ENCODE measurements at regions of chr7 and their contacts with region 1.

Region 1: GRCh38 chr7:18590744-18591340 is 95.3 kb downstream of the HDAC9 start:
- DNase-seq: no peak
- H3K4me3 ChIP-seq: no peak overlapping the region
- H3K27ac ChIP-seq: no peak overlapping the region
- H3K4me1 ChIP-seq: no peaks in the 10 kb centered on the region
- H3K27me3 ChIP-seq: no peaks in the 10 kb centered on the region
- CTCF ChIP-seq: peak in 1 of 3 experiments; percentile 62; a peak in 2 of 4 replicates
- EP300 ChIP-seq: no peak
- POLR2A ChIP-seq: no peak
- RAD21 ChIP-seq: peak; percentile 67

Region 2: GRCh38 chr7:18570890-18571478 is 19.9 kb before region 1 on chr7:
- CTCF ChIA-PET with region 1: interaction called, 53 read pairs
- POLR2A ChIA-PET with region 1: no interaction called
- DNase-seq: no peak
- H3K4me3 ChIP-seq: no peak overlapping the region
- H3K27ac ChIP-seq: no peak overlapping the region
- H3K4me1 ChIP-seq: peaks cover 0 to 9% (median 2%) of the 10 kb centered on the region in 4 experiments; a peak in 4 of 7 replicates
- H3K27me3 ChIP-seq: no peaks in the 10 kb centered on the region
- CTCF ChIP-seq: peak in 2 of 3 experiments; percentile 18 to 31; a peak in 2 of 4 replicates
- EP300 ChIP-seq: no peak
- POLR2A ChIP-seq: no peak
- RAD21 ChIP-seq: peak; percentile 57 to 59

Region 3: DNA sequence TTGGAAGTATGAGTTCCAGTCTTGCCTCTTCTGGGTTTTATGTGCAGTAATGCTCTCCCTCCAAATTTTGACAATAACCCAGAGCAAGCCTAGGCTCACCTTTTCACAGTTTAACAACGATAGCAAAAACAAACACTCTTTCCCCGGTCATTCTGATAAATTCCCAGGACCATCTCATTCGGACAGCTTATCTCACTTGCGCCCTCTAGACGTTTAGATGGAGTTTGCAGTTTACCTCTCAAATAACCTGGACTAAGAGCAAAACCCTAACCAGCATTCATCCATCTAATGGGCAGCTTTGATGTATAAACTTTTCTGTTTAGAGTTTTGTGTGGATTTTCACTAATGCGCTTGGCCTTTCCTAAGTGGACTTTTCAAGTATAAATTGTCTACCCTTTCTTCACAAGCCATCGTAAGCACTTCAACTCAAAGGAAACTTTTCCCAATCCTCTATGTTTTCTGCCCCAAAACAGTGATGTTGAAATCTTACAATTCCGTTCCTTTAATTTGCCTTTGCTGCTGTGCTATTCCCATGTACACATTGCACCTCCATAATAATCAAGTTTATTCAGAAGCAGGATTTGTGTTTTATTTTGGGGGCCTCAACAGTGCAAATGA is 19.6 kb after region 1 on chr7:
- CTCF ChIA-PET with region 1: interaction called, 13 read pairs
- POLR2A ChIA-PET with region 1: no interaction called
- DNase-seq: peak; percentile 3 to 55
- H3K4me3 ChIP-seq: no peak overlapping the region
- H3K27ac ChIP-seq: no peak overlapping the region
- H3K4me1 ChIP-seq: no peaks in the 10 kb centered on the region; a peak in 1 of 7 replicates
- H3K27me3 ChIP-seq: no peaks in the 10 kb centered on the region
- CTCF ChIP-seq: peak in 2 of 3 experiments; percentile 61 to 86; a peak in 2 of 4 replicates
- EP300 ChIP-seq: no peak
- POLR2A ChIP-seq: no peak
- RAD21 ChIP-seq: peak; percentile 57 to 70

Region 4: DNA sequence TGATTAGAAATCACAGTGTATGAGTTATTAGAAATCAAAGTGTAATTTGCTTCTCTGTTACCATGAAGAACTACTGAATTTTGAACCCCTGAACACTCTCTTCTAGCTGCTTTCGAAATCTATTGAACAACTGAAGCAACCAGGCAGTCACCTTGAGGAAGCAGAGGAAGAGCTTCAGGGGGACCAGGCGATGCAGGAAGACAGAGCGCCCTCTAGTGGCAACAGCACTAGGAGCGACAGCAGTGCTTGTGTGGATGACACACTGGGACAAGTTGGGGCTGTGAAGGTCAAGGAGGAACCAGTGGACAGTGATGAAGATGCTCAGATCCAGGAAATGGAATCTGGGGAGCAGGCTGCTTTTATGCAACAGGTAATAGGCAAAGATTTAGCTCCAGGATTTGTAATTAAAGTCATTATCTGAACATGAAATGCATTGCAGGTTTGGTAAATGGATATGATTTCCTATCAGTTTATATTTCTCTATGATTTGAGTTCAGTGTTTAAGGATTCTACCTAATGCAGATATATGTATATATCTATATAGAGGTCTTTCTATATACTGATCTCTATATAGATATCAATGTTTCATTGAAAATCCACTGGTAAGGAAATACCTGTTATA is 75.4 kb after region 1 on chr7:
- CTCF ChIA-PET with region 1: interaction called, 29 read pairs
- POLR2A ChIA-PET with region 1: no interaction called
- DNase-seq: peak; percentile 23 to 88
- H3K4me3 ChIP-seq: no peak overlapping the region
- H3K27ac ChIP-seq: no peak overlapping the region
- H3K4me1 ChIP-seq: no peaks in the 10 kb centered on the region
- H3K27me3 ChIP-seq: no peaks in the 10 kb centered on the region
- CTCF ChIP-seq: peak; percentile 88 to 100 (median 99)
- EP300 ChIP-seq: no peak
- POLR2A ChIP-seq: no peak
- RAD21 ChIP-seq: peak; percentile 84 to 90